Motor neuron (in vitro differentiated cells): ENCODE measurements at regions of chr3 and their contacts with region 1.

Region 1: GRCh38 chr3:196081791-196082618 is at the start of gene TFRC:
- ATAC-seq: peak; percentile 89 to 96 (median 94)
- H3K4me3 ChIP-seq: peak within 1 kb of the TSS; percentile 82 to 99 (median 96)
- H3K27ac ChIP-seq: peak within 1 kb of the TSS; percentile 86
- H3K4me1 ChIP-seq: peaks cover 9 to 13% of the 10 kb centered on the region in 2 donors
- total RNA-seq, gene TFRC: 39.1 to 148 (median 55.7) TPM

Region 2: GRCh38 chr3:196179380-196180308 is 97.6 kb after region 1 on chr3:
- in situ Hi-C with region 1: loop called in 2 of 9 experiments (anchors 10 to 25 kb)
- ATAC-seq: peak; percentile 26 to 88 (median 81)
- H3K4me3 ChIP-seq: no peak overlapping the region
- H3K27ac ChIP-seq: peak overlapping the region; percentile 56 to 76
- H3K4me1 ChIP-seq: peaks cover 31 to 32% of the 10 kb centered on the region in 2 donors

Region 3: DNA sequence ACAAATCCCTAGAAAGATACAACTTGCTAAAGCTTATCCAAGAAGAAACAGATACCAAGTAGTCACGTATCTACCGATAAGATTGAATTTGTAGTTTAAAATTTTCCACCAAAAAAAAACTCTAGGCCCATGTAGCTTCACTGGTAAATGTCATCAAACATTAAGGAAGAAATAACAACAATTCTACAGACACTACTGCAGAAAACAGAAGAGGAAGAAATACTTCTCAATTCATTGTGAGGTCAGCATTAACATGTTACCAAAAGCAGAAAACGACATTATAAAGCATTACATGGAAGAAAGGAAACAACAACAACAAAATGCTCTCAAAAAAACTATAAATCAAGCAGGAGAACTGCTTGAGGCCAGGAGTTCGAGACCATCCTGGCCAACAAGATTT is 283.7 kb after region 1 on chr3:
- in situ Hi-C with region 1: no loop called
- ATAC-seq: no peak
- H3K4me3 ChIP-seq: no peak overlapping the region
- H3K27ac ChIP-seq: no peak overlapping the region
- H3K4me1 ChIP-seq: no peaks in the 10 kb centered on the region